Calu3 (cell line): ENCODE measurements at regions of chr1 and their contacts with region 1.

Region 1: GRCh38 chr1:27556781-27557595 is 47.0 kb downstream of the AHDC1 start:
- DNase-seq: peak; percentile 88
- H3K4me3 Mint-ChIP-seq: peak overlapping the region; percentile 43
- H3K27ac Mint-ChIP-seq: peak overlapping the region; percentile 94
- H3K4me1 Mint-ChIP-seq: peaks cover 42% of the 10 kb centered on the region
- H3K27me3 Mint-ChIP-seq: no peaks in the 10 kb centered on the region
- CTCF ChIP-seq: peak; percentile 93

Region 2: DNA sequence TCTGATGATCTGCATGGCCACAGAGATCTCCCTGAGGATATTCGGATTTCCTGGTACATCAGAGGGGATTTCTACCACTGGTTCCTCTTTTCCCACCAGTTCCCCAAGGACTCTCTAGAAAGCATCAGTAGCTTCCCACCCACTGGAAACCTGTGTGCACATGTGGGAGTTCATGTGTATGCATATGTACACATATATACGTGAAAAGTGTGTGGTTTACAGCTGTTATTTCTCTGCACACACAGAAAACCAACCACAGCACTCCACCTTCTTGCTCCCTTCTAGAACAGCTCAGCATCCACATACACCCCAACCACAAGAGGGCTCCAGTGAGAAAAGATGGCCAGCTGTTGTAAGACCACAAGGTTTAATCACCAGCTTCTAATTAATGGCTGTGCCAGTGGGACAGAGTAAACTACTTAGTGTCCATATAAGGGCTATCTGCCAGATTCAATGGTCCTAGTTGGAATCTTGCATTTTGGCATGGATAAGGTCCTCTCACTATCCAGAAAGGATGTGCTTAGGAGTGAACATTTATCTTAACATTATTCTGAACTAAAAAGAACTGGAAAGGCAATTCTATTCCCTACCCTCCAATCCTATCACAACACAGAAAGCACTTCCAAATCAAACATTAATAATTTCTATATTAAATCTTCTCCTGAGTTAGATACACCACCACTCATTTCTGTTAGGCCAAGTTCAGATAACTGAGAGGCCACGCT is 140.4 kb before region 1 on chr1:
- CTCF ChIA-PET with region 1: interaction called, 11 read pairs
- intact Hi-C with region 1: no loop called
- DNase-seq: peak; percentile 56
- H3K4me3 Mint-ChIP-seq: no peak overlapping the region
- H3K27ac Mint-ChIP-seq: no peak overlapping the region
- H3K4me1 Mint-ChIP-seq: peaks cover 18% of the 10 kb centered on the region
- H3K27me3 Mint-ChIP-seq: no peaks in the 10 kb centered on the region
- CTCF ChIP-seq: peak; percentile 48

Region 3: DNA sequence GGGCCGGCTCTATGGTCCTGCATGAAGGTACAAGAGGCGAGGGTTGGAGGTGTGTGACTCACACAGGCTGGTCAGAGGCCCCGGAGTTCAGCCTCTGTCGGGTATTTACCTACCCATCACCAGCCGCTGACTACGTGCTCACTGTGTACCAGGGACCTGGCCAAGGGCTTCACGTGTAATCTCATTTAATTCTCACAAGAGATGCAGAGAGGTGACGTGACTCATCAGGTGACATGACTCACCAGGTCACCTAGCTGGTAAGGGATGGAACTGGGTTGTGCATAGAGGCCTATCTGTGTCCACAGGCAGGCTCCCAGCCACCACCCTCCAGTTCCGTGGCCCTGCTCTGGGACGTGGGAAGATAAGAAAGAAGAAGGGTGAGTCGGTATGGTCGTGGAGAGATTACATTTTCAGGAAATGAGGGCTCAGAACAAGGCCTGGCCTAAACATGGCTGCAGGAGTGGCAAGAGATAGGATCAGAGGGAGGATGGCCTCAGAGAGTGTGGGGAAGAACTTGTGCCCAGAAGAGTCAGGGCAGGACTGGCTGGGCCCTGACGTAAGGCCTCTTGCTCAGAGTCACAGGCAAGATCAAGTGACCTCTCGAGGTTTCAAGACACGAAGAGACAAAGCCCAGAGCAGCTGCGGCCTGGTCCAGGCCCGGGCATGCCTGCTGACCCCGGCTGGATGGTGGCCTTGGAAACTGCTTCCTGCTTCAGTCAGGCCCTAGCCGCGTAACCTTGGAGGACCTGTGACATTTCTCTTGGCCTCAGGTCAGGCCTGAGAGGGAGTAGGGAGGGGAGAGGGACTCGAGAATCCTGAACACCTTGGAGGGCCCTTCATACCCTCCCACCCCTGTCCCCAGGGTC is 14.3 kb before region 1 on chr1:
- CTCF ChIA-PET with region 1: interaction called, 10 read pairs
- intact Hi-C with region 1: no loop called
- DNase-seq: peak; percentile 80
- H3K4me3 Mint-ChIP-seq: peak overlapping the region; percentile 34
- H3K27ac Mint-ChIP-seq: peak overlapping the region; percentile 90
- H3K4me1 Mint-ChIP-seq: peaks cover 46% of the 10 kb centered on the region
- H3K27me3 Mint-ChIP-seq: no peaks in the 10 kb centered on the region
- CTCF ChIP-seq: no peak

Region 4: GRCh38 chr1:27574871-27575831 is 18.2 kb after region 1 on chr1:
- CTCF ChIA-PET with region 1: interaction called, 12 read pairs
- intact Hi-C with region 1: no loop called
- DNase-seq: peak; percentile 67
- H3K4me3 Mint-ChIP-seq: peak overlapping the region; percentile 37
- H3K27ac Mint-ChIP-seq: no peak overlapping the region
- H3K4me1 Mint-ChIP-seq: peaks cover 42% of the 10 kb centered on the region
- H3K27me3 Mint-ChIP-seq: no peaks in the 10 kb centered on the region
- CTCF ChIP-seq: no peak

Region 5: DNA sequence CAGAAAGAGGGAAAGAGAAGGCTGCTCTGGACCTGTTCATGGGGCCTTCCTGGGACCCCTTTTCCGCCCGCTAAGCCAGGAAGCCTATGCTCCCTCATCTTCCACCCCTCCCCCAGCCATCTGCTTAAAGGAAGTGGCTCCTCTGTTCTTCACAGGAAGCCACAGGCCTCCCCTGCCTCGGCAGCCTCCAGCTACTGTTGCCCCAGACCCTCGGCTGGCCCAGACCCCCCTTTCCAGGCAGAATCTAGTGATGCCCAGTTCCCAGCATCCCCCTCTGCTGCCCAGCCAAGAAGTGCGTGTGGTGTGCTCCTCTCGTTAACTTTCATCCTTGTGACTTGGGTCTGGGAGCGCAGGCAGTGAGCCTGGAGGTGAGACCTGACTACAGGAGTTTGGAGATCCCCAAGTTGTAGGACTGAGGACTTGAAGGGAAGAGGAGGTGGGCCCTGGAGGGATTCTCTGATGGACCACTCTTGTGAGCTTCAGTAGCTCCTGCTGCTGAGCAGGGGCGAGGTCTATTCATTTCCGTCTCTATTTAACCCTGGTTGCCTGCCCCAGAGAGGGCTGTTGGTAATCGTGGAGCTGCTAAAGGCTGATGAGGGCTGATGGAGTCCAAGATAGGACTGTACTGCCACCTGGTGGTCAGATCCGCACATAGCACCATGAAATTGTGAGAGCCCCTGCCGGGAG is 105.9 kb after region 1 on chr1:
- CTCF ChIA-PET with region 1: interaction called, 7 read pairs
- intact Hi-C with region 1: loop called (anchors 5 kb)
- DNase-seq: peak; percentile 80
- H3K4me3 Mint-ChIP-seq: no peak overlapping the region
- H3K27ac Mint-ChIP-seq: peak overlapping the region; percentile 82
- H3K4me1 Mint-ChIP-seq: peaks cover 27% of the 10 kb centered on the region
- H3K27me3 Mint-ChIP-seq: no peaks in the 10 kb centered on the region
- CTCF ChIP-seq: peak; percentile 76

Region 6: DNA sequence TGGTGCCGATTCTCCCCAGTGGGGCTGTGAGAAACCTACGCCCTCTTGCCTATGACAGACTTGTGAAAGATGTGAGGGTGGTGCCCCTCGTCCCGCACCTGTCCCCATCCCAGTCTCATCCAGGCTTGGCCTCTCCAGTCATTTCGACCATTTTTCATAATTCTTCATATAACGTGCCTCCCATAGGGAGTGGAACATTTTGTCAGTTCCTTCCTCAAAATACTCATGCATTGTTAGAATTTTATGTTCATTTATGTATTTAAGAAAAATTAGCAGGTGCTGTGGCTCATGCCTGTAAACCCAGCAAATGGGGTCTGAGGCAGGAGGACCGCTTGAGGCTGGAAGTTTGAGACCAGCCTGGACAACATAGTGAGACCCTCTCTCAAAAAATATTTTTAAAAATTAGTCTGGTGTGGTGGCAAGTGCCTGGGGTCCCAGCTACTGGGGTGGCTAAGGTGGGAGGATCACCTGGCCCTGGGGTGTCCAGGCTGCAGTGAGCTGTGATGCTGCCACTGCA is 358.2 kb after region 1 on chr1:
- CTCF ChIA-PET with region 1: no interaction called
- intact Hi-C with region 1: no loop called
- DNase-seq: no peak
- H3K4me3 Mint-ChIP-seq: peak overlapping the region; percentile 99
- H3K27ac Mint-ChIP-seq: peak overlapping the region; percentile 99
- H3K4me1 Mint-ChIP-seq: no peaks in the 10 kb centered on the region
- H3K27me3 Mint-ChIP-seq: no peaks in the 10 kb centered on the region
- CTCF ChIP-seq: no peak